Endothelial cell of umbilical vein (primary cell): ENCODE measurements at regions of chr13 and their contacts with region 1.

Region 1: GRCh38 chr13:38582133-38582532 is 104.7 kb upstream of the FREM2 start:
- DNase-seq: peak; percentile 24
- H3K4me3 ChIP-seq: no peak overlapping the region
- H3K27ac ChIP-seq: no peak overlapping the region
- H3K4me1 ChIP-seq: no peaks in the 10 kb centered on the region
- H3K27me3 ChIP-seq: no peaks in the 10 kb centered on the region
- CTCF ChIP-seq: peak; percentile 13 to 14
- POLR2A ChIP-seq: no peak

Region 2: GRCh38 chr13:37074703-37075102 is 1507.4 kb before region 1 on chr13:
- CTCF ChIA-PET with region 1: interaction called, 11 read pairs
- POLR2A ChIA-PET with region 1: no interaction called
- dilution Hi-C with region 1: no loop called
- intact Hi-C with region 1: no loop called
- DNase-seq: peak; percentile 30
- H3K4me3 ChIP-seq: no peak overlapping the region
- H3K27ac ChIP-seq: no peak overlapping the region
- H3K4me1 ChIP-seq: no peaks in the 10 kb centered on the region
- H3K27me3 ChIP-seq: no peaks in the 10 kb centered on the region
- CTCF ChIP-seq: peak in 1 of 2 donors; percentile 17
- POLR2A ChIP-seq: no peak

Region 3: DNA sequence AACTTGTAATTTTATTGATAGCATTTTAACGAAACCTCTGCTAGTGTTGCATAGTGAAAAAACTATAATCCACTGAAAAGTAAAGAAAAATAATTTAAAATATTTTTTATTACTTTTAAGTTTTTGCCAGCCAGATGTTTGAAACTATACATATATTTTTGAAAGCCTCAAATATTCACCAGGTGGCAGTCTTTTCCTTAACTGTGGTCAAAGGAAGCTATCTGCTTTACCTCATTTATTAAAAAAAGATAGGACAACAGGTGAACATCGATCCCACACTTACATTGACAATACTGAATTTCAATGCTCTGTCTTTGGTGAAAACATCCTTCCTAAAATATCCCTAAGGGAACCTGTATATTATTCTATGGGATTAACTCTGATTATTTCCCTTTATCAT is 813.1 kb before region 1 on chr13:
- CTCF ChIA-PET with region 1: interaction called, 10 read pairs
- POLR2A ChIA-PET with region 1: no interaction called
- dilution Hi-C with region 1: no loop called
- intact Hi-C with region 1: no loop called
- DNase-seq: no peak
- H3K4me3 ChIP-seq: no peak overlapping the region
- H3K27ac ChIP-seq: no peak overlapping the region
- H3K4me1 ChIP-seq: no peaks in the 10 kb centered on the region
- H3K27me3 ChIP-seq: no peaks in the 10 kb centered on the region
- CTCF ChIP-seq: no peak
- POLR2A ChIP-seq: no peak

Region 4: DNA sequence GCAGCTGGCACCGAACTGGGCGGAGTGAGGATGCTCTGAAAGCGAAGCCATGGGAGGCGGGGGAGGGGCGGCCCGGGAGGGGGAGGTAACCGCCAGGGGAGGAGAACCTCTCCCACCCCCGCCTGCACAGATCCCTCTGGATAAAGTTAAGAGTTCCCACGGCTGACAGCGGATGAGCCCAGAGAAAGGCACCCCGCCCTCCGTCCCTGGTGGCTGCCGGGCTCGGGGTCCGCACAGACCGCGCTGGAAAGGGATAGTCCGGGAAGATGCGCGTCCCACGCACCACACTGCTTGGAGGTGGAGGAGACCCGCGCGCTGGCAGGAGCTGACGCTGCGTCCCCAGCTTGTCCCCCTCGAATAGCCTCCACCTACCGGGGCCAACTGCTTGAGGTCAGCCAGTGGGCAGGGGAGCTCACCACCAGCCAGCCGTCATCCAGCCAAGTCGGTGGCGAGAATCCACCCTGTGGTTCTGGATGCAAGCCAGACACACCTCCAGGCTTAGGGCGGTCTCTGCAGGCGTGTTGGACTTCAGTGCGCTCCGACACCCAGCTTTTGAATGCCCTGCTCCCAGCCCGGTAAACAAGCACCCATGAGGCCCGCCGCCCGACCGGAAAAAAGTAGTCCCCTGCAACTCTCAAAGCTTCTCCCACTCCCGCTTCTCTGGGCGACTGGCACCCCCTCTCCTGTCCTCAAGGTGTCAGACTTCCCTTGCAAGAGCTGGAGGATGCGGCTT is 712.2 kb before region 1 on chr13 and contains the start of gene TRPC4:
- CTCF ChIA-PET with region 1: interaction called, 21 read pairs
- POLR2A ChIA-PET with region 1: no interaction called
- dilution Hi-C with region 1: no loop called
- intact Hi-C with region 1: no loop called
- DNase-seq: peak; percentile 22
- H3K4me3 ChIP-seq: peak within 1 kb of the TSS; percentile 22 to 84 (median 66)
- H3K27ac ChIP-seq: no peak within 1 kb of the TSS
- H3K4me1 ChIP-seq: peaks cover 21% of the 10 kb centered on the region
- H3K27me3 ChIP-seq: peaks cover 16 to 24% of the 10 kb centered on the region in 2 experiments
- CTCF ChIP-seq: peak; percentile 11 to 16
- POLR2A ChIP-seq: no peak
- total RNA-seq, gene TRPC4: 0.42 and 0.64 TPM in 2 replicates

Region 5: DNA sequence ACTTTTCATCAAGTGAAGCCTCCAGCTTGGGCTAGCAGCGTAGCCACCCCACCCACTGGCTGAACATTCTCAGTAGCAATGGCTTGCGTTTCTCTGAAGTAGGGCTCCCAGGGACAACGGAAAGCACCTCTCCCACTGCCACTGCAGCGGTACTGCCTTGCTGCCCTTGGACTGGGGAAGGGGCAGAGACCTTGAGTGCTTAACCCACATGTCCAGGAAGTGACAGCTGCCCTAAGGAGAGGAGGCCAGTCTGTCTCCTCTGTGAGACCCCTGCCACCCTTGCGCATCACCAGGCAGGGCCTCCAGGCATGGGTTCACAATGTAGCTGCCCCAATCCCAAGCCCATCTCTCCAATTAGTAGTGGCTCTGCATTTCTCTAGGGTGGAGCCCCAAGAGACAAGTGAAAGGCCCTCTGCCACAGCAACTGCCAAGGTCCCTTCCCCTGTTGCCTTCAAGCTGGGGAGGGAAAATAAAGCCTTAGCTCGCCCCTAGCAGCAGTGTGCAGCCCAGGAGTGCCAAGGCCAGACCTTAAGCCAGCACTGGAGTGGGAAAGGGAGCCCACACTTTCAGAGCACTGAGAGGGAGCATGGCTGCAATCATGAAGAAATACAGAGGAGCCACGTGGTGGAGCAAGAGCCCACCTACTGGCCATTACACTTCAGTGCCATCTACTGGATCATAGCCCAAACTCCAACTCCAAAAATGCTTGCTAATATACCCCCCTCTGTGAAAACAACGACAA is 536.7 kb before region 1 on chr13:
- CTCF ChIA-PET with region 1: interaction called, 7 read pairs
- POLR2A ChIA-PET with region 1: no interaction called
- dilution Hi-C with region 1: no loop called
- intact Hi-C with region 1: loop called (anchors 5 kb)
- DNase-seq: peak; percentile 40
- H3K4me3 ChIP-seq: no peak overlapping the region
- H3K27ac ChIP-seq: no peak overlapping the region
- H3K4me1 ChIP-seq: no peaks in the 10 kb centered on the region
- H3K27me3 ChIP-seq: no peaks in the 10 kb centered on the region
- CTCF ChIP-seq: peak; percentile 61 to 73
- POLR2A ChIP-seq: no peak

Region 6: DNA sequence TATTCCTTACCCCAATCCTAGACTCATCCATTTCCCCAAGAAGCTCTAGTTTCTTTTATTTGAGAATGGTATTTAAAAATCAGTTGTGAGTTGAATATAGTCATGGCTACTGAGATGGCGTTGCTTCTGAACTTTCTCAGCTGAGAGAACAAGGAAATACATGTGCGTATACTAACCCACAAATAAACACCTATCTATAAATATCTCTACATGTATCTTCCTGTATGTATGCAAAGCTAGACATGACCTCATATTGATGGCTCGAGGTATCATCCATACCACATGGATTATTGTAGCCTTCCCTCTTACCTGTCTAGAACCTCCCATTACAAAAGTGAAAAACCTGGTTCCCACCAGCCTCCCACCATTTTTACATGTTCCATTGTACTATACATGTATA is 91.5 kb before region 1 on chr13:
- CTCF ChIA-PET with region 1: no interaction called
- POLR2A ChIA-PET with region 1: no interaction called
- dilution Hi-C with region 1: no loop called
- intact Hi-C with region 1: no loop called
- DNase-seq: no peak
- H3K4me3 ChIP-seq: no peak overlapping the region
- H3K27ac ChIP-seq: no peak overlapping the region
- H3K4me1 ChIP-seq: no peaks in the 10 kb centered on the region
- H3K27me3 ChIP-seq: no peaks in the 10 kb centered on the region
- CTCF ChIP-seq: no peak
- POLR2A ChIP-seq: no peak

Region 7: DNA sequence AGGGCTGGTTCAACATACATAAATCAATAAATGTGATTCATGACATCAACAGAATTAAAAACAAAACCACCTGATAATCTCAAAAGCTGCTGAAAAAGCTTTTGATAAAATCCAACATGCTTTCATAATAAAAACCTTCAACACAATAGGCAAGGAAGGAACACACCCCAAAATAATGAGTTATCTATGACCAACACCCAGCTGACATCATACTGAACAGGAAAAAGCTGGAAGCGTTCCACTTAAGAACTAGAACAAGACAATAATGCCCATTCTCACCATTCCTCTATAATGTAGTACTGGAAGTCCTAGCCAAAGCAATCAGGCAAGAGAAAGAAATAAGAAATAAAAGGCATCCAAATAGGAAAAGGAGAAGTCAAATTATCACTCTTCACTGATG is 11.4 kb before region 1 on chr13:
- CTCF ChIA-PET with region 1: interaction called, 20 read pairs
- POLR2A ChIA-PET with region 1: no interaction called
- dilution Hi-C with region 1: no loop called
- intact Hi-C with region 1: no loop called
- DNase-seq: no peak
- H3K4me3 ChIP-seq: no peak overlapping the region
- H3K27ac ChIP-seq: no peak overlapping the region
- H3K4me1 ChIP-seq: no peaks in the 10 kb centered on the region
- H3K27me3 ChIP-seq: no peaks in the 10 kb centered on the region
- CTCF ChIP-seq: no peak
- POLR2A ChIP-seq: no peak

Region 8: DNA sequence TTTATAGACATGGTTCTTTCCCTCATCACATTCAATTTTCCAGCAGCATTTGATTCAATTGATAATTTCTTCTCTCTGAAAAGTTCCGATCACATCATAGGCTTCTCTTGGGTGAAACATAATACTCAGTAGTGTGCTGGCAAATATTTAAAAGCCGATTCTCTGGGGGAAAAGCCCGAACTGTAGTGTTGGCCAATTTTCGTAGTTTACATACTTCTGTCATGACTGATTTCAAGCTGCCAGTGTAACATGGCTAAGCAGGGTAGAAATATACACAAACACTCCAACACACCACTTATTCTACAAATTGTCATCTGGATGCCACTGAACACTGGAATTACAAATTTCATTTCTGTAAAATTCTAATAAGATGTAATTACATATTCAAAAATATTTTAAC is 48.6 kb after region 1 on chr13:
- CTCF ChIA-PET with region 1: no interaction called
- POLR2A ChIA-PET with region 1: no interaction called
- dilution Hi-C with region 1: no loop called
- intact Hi-C with region 1: no loop called
- DNase-seq: no peak
- H3K4me3 ChIP-seq: no peak overlapping the region
- H3K27ac ChIP-seq: no peak overlapping the region
- H3K4me1 ChIP-seq: no peaks in the 10 kb centered on the region
- H3K27me3 ChIP-seq: no peaks in the 10 kb centered on the region
- CTCF ChIP-seq: no peak
- POLR2A ChIP-seq: no peak

Region 9: DNA sequence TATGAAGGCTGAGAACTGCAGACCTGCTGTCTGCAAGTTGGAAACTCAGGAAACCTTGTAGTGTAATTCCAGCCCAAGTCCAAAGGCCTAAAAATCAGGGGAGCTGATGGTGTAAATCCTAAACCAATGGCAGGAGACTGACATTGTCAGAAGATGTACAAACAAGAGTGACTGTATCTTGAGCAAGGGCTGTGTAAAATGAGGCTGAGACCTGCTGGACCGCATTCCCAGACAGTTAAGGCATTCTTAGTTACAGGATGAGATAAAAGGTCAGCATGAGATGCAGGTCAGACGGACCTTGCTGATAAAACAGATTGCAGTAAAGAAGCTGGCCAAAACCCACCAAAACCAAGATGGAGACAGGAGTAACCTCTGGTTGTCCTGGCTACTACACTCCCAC is 1221.0 kb after region 1 on chr13:
- CTCF ChIA-PET with region 1: no interaction called
- POLR2A ChIA-PET with region 1: no interaction called
- dilution Hi-C with region 1: no loop called
- intact Hi-C with region 1: no loop called
- DNase-seq: no peak
- H3K4me3 ChIP-seq: no peak overlapping the region
- H3K27ac ChIP-seq: no peak overlapping the region
- H3K4me1 ChIP-seq: no peaks in the 10 kb centered on the region
- H3K27me3 ChIP-seq: no peaks in the 10 kb centered on the region
- CTCF ChIP-seq: no peak
- POLR2A ChIP-seq: no peak